Activated CD8-positive, alpha-beta T cell treated with anti-CD3 and anti-CD28 coated beads, Interleukin-2, amount 10 ng/mL, durations not matched to agents 7 days and 5 days (primary cell): ENCODE measurements at regions of chr2 and their contacts with region 1.

Region 1: DNA sequence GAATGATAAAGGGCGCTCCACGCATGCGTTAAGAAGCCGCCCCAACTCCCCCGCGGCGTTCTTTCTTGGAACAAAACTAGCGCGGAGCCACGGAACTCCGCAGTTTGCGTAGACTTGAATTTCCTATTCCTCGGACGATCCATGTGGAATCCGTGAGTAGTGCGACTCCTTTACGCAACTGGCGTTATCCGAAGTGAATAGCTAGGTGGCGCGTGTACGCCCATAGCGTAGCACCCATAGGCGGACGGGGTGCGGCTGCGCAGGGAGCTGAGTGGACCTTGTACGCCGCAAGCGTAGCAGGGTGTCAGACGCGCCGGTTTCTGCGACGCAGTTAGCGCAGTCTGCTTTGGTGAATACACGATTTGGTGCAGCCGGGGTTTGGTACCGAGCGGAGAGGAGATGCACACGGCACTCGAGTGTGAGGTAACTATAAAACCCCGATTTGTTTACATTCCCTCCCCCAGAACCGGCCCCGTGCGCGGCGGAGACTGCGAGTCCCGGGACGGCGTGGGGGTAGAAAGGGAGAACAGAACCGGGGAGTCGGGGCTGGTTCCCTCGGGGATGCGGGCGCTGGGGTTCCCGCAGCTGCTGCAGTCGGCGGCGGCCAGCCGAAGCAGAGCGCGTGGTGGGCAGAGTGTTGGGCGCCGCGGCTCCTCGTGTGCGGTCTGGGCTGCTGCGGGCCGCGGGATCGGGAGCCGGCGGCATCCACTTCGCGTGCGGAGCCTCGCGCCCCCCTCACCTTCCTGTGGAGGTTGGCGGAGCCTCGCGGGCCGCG is at the start of gene SLC39A10:
- DNase-seq: peak; percentile 98
- ATAC-seq: peak; percentile 82
- H3K4me3 Mint-ChIP-seq: peak within 1 kb of the TSS; percentile 98
- H3K27ac Mint-ChIP-seq: peak within 1 kb of the TSS; percentile 100
- H3K4me1 Mint-ChIP-seq: peaks cover 28% of the 10 kb centered on the region
- H3K27me3 Mint-ChIP-seq: peaks cover 2% of the 10 kb centered on the region
- total RNA-seq, gene SLC39A10: 49.0 to 50.9 TPM

Region 2: DNA sequence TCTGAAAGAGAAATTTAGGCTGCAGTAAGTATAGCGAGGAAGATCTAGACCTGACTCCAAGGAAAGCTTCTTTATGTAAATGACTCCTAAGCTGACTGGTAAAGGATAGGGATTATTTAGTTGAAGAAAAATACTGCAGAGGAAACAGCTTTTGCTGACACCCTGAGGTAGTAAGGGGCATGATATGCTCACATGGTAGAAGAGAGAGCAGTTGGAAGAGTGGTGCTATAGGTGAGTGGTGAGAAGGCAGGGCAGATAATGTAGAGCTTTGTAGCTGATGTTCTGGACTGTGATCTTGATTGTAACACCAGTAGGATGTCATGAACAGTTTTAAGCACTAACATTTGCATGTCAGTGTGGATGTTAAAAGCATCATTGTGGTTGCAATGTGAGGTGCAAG is 639.2 kb before region 1 on chr2:
- CTCF ChIA-PET with region 1: no interaction called
- POLR2A ChIA-PET with region 1: no interaction called
- DNase-seq: no peak
- ATAC-seq: no peak
- H3K4me3 Mint-ChIP-seq: no peak overlapping the region
- H3K27ac Mint-ChIP-seq: no peak overlapping the region
- H3K4me1 Mint-ChIP-seq: no peaks in the 10 kb centered on the region
- H3K27me3 Mint-ChIP-seq: no peaks in the 10 kb centered on the region

Region 3: GRCh38 chr2:195318440-195319111 is 338.5 kb before region 1 on chr2:
- CTCF ChIA-PET with region 1: interaction called, 50 read pairs
- POLR2A ChIA-PET with region 1: interaction called, 4 read pairs
- DNase-seq: peak; percentile 71
- ATAC-seq: no peak
- H3K4me3 Mint-ChIP-seq: no peak overlapping the region
- H3K27ac Mint-ChIP-seq: no peak overlapping the region
- H3K4me1 Mint-ChIP-seq: peaks cover 19% of the 10 kb centered on the region
- H3K27me3 Mint-ChIP-seq: no peaks in the 10 kb centered on the region

Region 4: GRCh38 chr2:195486987-195487644 is 169.9 kb before region 1 on chr2:
- CTCF ChIA-PET with region 1: interaction called, 8 read pairs
- POLR2A ChIA-PET with region 1: interaction called, 12 read pairs
- DNase-seq: peak; percentile 49
- ATAC-seq: peak; percentile 92
- H3K4me3 Mint-ChIP-seq: peak overlapping the region; percentile 13
- H3K27ac Mint-ChIP-seq: peak overlapping the region; percentile 78
- H3K4me1 Mint-ChIP-seq: peaks cover 37% of the 10 kb centered on the region
- H3K27me3 Mint-ChIP-seq: no peaks in the 10 kb centered on the region

Region 5: DNA sequence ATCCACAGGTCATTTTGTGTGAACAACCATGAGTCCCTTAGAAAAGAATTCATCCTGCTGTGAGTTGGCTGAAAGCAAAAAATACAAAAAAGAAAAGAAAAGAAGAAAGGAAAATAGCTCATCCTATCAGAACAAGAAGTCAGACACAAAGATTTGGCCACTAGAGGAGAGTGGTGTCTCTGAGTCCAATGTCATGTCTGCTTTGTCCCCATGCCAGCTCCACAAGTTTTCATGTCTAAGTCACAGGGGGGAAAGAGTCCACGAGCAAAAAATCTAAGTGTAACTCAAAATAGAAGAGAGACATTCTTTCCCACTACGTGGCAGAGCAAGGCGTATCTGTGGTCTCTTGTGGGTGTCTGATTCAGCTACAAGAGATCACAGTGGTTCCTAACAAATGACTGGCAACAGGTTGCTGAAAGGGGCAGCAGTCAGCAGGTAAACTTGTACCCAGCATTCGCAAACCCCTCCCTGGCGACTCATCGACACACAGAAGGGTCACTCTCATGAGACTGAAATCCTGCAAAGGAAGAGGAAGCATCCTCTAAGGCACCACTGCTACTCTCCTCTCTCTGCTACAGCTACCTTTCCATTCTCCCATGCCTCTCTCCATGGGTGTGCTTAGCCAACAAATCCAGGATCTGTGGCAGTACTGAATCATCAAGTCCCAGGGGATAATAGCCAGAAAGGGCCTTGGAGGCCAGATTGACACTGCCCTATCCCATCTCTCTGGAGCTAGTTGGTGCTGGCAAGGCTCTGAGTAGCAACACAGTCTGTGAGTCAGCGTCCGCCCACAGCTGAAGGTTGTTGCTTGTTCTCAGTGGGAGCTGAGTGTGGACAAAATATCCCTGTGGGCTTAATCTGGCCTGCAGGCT is 123.0 kb before region 1 on chr2:
- CTCF ChIA-PET with region 1: interaction called, 120 read pairs
- POLR2A ChIA-PET with region 1: interaction called, 215 read pairs
- DNase-seq: peak; percentile 81
- ATAC-seq: peak; percentile 58
- H3K4me3 Mint-ChIP-seq: peak overlapping the region; percentile 98
- H3K27ac Mint-ChIP-seq: peak overlapping the region; percentile 100
- H3K4me1 Mint-ChIP-seq: peaks cover 83% of the 10 kb centered on the region
- H3K27me3 Mint-ChIP-seq: no peaks in the 10 kb centered on the region

Region 6: GRCh38 chr2:195559431-195559914 is 97.6 kb before region 1 on chr2:
- CTCF ChIA-PET with region 1: interaction called, 22 read pairs
- POLR2A ChIA-PET with region 1: interaction called, 148 read pairs
- DNase-seq: peak; percentile 95
- ATAC-seq: peak; percentile 94
- H3K4me3 Mint-ChIP-seq: peak overlapping the region; percentile 52
- H3K27ac Mint-ChIP-seq: peak overlapping the region; percentile 98
- H3K4me1 Mint-ChIP-seq: peaks cover 72% of the 10 kb centered on the region
- H3K27me3 Mint-ChIP-seq: no peaks in the 10 kb centered on the region

Region 7: GRCh38 chr2:195590861-195591205 is 66.2 kb before region 1 on chr2:
- CTCF ChIA-PET with region 1: interaction called, 13 read pairs
- POLR2A ChIA-PET with region 1: interaction called, 4 read pairs
- DNase-seq: no peak
- ATAC-seq: no peak
- H3K4me3 Mint-ChIP-seq: no peak overlapping the region
- H3K27ac Mint-ChIP-seq: no peak overlapping the region
- H3K4me1 Mint-ChIP-seq: peaks cover 21% of the 10 kb centered on the region
- H3K27me3 Mint-ChIP-seq: no peaks in the 10 kb centered on the region

Region 8: GRCh38 chr2:195687320-195688086 is 30.5 kb after region 1 on chr2:
- CTCF ChIA-PET with region 1: interaction called, 12 read pairs
- POLR2A ChIA-PET with region 1: no interaction called
- DNase-seq: no peak
- ATAC-seq: no peak
- H3K4me3 Mint-ChIP-seq: no peak overlapping the region
- H3K27ac Mint-ChIP-seq: no peak overlapping the region
- H3K4me1 Mint-ChIP-seq: peaks cover 14% of the 10 kb centered on the region
- H3K27me3 Mint-ChIP-seq: no peaks in the 10 kb centered on the region